ENCODE measurements at regions of chr3 and their contacts with region 1.

Region 1: DNA sequence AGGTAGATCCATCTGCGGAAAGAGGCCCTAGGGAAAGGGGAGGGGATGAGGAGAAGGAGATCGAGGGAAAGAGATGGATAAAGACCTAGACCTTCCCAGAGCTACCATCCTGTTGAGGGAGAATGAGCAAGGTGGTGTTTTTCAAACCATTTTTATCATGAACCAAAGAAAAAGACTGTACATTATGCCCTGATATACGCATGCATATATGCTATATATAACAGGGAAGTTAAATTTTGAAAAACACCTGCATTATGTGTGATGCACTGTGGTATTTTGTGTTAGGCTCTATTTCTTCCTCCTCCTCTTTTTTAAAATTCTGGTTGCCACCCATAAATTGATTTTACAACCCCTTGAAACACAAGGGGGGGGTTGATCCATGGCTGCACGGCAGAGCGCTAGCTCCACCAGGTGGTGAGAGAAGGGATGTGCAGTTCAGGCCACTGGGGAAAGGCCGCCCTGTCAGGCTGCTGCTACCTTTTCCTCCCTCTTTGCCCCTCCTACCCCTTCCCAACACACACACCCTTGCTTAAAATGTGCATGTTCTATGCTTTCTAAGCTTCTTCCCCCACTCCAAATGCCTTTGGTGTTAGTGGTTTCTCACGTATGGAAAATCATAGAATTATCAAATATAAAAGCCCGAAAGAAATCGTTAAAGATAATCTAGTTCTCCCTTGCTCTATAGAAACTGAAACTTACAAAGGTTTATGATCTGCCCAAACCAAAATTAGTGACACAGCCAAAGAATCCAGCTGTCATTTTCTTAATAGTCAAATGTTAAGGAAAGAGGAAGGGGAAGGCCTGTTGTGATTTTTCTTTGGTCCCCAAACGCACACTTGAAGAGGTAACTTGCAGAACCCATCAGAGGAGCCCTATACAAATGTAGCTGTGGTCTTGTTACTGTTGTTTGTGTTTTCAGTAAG is 262.0 kb upstream of the UMPS start:
- DNase-seq: peak; percentile 68
- CTCF ChIP-seq: peak; percentile 95

Region 2: GRCh38 chr3:124351430-124352148 is 116.7 kb before region 1 on chr3:
- CTCF ChIA-PET with region 1: interaction called, 110 read pairs
- POLR2A ChIA-PET with region 1: no interaction called
- DNase-seq: peak; percentile 47
- CTCF ChIP-seq: peak; percentile 44

Region 3: DNA sequence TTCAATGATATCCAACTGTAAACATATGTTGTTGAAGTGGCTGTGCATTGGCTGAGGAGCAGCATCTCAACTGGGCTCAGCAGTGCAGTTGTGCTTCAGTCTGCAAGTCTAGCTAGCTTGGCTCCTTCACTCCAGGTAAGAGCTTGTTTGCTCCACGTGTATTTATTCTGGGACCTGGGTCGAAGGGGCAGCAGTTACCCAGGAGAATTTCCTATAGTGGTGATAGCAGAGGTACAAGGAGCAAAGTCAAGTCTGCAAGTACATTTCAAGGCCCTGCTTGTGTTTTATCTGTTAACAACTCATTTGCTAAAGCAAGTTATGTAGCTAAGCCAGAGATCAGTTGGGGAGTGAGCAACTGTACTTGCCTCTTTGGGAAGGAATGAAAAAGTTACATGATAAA is 24.2 kb before region 1 on chr3:
- CTCF ChIA-PET with region 1: interaction called, 35 read pairs
- POLR2A ChIA-PET with region 1: no interaction called
- DNase-seq: no peak
- CTCF ChIP-seq: no peak

Region 4: GRCh38 chr3:124451630-124452317 is 16.5 kb before region 1 on chr3:
- CTCF ChIA-PET with region 1: interaction called, 35 read pairs
- POLR2A ChIA-PET with region 1: no interaction called
- DNase-seq: no peak
- CTCF ChIP-seq: no peak

Measured in GM10248 (cell line).